Posterior vena cava (tissue), 2 donors: ENCODE measurements at regions of chr17 and their contacts with region 1.

Region 1: DNA sequence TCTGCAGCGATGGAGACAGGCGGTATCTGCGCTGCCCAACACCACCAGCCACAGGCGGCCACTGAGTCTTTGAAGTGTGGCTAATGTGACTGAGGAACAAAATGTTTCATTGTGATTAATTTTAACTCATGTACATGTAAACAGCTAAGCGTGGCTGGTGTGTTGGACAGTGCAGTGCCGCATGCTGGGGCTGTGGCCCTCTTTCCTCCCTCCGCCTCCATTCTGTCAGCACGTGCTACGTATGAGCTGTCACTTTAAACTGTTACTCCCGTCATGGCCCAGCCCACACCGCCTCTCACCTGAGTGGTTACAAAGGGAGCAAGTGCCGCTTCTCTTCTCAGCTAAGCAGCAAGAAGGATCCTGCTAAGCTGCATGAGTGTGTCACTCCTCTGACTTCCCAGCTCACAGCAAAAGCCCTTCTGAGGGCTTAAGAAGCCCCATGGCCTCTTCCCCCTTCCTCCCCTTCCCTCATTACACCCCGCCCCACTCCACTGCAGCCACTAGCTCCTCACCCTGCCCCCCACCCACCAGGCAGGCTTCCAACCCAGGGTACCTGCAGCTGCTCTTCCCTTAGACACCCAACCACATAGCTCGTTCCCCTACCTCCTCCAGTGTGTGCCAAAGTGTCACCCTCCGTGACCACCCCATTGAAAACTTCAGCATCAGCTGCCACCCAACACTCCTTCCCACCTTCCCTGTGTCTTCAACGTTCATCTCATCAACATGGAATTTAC is 15.0 kb downstream of the HASPIN start:
- DNase-seq: no peak

Region 2: GRCh38 chr17:3594051-3594800 is 144.5 kb before region 1 on chr17:
- intact Hi-C with region 1: no loop called
- DNase-seq: no peak

Region 3: GRCh38 chr17:3723556-3724369 is 15.0 kb before region 1 on chr17 and contains the start of gene HASPIN:
- intact Hi-C with region 1: no loop called
- DNase-seq: peak; percentile 97
- total RNA-seq, gene HASPIN: 0.24 TPM in 1 of 2 donors, not detected in the other

Region 4: GRCh38 chr17:3796110-3796821 is 57.5 kb after region 1 on chr17:
- intact Hi-C with region 1: loop called in 1 of 2 experiments (anchors 10 kb)
- DNase-seq: no peak

Region 5: GRCh38 chr17:3845621-3846441 is 107.1 kb after region 1 on chr17 and contains the start of gene NCBP3:
- intact Hi-C with region 1: loop called in 1 of 2 experiments (anchors 10 kb)
- DNase-seq: peak; percentile 97
- total RNA-seq, gene NCBP3: 22.3 to 22.8 TPM